Activated T-helper 2 cell treated with anti-CD3 and anti-CD28 coated beads, Interferon-gamma antibody, Interleukin-2, Interleukin-4, amounts not matched to agents 10 μg/mL and 5 μg/mL and 100 μg/mL, durations not matched to agents 14 hours and 24 hours and 36 hours (primary cell): ENCODE measurements at regions of chr2 and their contacts with region 1.

Region 1: DNA sequence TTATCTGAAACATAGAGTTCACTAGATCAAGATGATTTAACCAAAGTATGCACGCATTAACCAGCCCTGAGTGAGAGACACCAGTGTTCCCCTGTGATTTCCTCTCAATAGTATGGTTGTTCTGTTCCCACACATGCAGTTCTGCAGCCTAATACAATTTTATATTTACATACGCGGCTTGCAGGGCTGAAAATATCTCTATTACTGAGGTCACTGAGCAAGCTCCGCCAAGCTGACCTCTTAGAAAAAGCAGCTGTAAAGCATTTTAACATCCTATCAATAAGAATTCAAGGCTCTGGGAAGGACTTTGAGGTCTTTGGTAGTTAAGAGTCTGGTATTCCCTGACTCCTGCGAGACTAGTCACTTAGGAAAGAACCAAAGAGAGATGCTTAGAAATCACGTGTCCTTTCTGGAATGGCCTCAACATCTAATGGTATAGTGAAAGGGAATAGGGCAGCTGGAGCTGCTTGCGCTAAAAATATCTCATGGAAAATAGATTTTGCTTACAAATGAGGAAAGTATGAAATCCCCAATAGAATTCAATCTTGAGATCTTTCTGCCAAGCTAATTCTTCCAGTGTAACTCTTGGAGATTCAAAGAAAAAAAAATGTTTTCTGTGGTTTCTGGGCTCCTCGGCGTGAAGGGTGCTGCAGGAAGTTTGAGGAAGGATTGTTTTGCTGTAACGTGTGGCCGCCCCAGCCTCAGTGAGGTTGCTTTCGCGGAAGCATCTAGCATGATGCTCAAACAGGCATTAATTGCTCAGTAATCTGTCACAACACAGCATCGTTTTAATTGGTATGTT is 59.2 kb downstream of the DOCK10 start:
- DNase-seq: no peak
- H3K4me3 Mint-ChIP-seq: peak overlapping the region; percentile 37
- H3K27ac Mint-ChIP-seq: peak overlapping the region; percentile 90
- H3K4me1 Mint-ChIP-seq: peaks cover 62% of the 10 kb centered on the region
- H3K27me3 Mint-ChIP-seq: no peaks in the 10 kb centered on the region

Region 2: GRCh38 chr2:224938651-224939182 is 44.4 kb before region 1 on chr2:
- intact Hi-C with region 1: loop called (anchors 2 kb)
- DNase-seq: no peak
- H3K4me3 Mint-ChIP-seq: peak overlapping the region; percentile 62
- H3K27ac Mint-ChIP-seq: peak overlapping the region; percentile 80
- H3K4me1 Mint-ChIP-seq: peaks cover 74% of the 10 kb centered on the region
- H3K27me3 Mint-ChIP-seq: no peaks in the 10 kb centered on the region

Region 3: DNA sequence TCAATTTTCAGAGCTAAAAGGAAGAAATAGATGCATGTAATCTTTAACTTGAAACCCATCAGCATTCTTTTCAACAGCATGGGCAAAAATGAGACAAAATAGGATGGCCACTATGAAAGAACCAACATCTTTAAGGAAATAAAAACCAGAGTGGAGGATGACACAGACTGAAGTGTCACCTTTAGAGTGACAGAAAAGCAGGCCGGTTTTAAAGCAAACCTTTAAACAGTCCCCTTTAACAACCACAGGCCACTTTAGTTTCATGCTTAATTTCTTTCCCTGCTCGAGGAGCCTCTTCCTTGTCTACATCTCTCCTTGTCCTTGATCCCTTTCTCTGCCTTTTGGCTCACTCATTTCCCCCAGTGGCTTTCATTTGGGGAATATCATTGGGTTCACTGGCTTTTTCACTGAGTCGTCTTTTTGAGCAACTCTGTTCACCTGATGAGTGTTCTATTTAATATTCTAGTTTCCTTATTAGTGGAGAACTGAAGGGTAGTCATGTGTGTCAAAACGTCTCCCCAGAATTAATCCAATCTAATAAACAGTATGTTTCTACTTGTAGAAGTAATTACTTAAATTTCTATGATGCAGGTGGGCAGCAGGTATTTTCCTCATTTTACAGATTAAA is 13.4 kb before region 1 on chr2:
- intact Hi-C with region 1: loop called (anchors 1 kb)
- DNase-seq: no peak
- H3K4me3 Mint-ChIP-seq: no peak overlapping the region
- H3K27ac Mint-ChIP-seq: peak overlapping the region; percentile 62
- H3K4me1 Mint-ChIP-seq: peaks cover 50% of the 10 kb centered on the region
- H3K27me3 Mint-ChIP-seq: no peaks in the 10 kb centered on the region

Region 4: DNA sequence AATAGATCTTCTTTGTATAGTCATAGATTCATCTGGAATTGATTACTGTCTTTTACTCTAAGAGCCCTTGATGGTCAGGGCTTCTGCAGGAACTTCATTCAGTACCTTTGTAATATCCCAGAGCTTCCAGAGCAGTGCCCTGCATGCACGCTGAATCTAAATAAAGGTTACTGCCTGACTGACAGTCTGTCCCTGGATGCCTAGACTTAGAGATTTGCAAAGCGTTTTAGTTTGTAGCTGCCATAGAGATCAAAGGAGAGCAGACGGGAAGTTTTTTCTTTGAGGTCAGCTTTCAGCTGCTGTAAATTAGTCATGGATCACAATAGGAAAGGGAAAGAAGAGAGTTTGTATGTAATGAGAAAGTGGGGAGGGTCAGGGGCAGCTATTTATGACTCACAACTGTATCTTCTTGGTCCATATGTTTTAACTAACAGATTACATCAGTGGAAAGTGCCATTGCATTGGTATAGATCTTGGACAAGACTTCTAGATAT is 371.2 kb after region 1 on chr2:
- intact Hi-C with region 1: no loop called
- DNase-seq: no peak
- H3K4me3 Mint-ChIP-seq: no peak overlapping the region
- H3K27ac Mint-ChIP-seq: no peak overlapping the region
- H3K4me1 Mint-ChIP-seq: no peaks in the 10 kb centered on the region
- H3K27me3 Mint-ChIP-seq: peaks cover 3% of the 10 kb centered on the region